IMR-90 (cell line): ENCODE measurements at regions of chr12 and their contacts with region 1.

Region 1: DNA sequence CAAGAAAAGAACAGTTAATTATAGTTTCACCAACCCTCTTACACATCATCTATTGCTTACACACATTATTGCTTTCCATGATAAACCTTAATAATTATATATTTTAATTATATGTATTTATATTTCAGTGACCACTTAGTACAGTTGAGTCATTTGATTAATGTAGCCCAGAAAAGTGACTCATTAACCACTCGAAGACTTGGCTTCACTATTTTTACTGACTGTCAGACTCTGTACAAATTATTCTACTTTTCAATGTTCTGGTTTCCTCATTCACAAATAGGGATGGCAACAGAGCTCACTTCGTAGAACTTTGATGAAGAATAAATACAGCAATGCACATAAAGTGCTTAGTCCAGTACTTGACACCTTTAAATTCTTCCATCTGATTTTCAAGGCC is 98.3 kb downstream of the CFAP54 start:
- DNase-seq: peak; percentile 22
- ATAC-seq: no peak
- H3K4me3 ChIP-seq: no peak overlapping the region
- H3K27ac ChIP-seq: no peak overlapping the region
- H3K4me1 ChIP-seq: no peaks in the 10 kb centered on the region
- H3K27me3 ChIP-seq: no peaks in the 10 kb centered on the region
- CTCF ChIP-seq: no peak
- POLR2A ChIP-seq: no peak
- RAD21 ChIP-seq: no peak

Region 2: GRCh38 chr12:96195845-96196451 is 391.7 kb before region 1 on chr12:
- CTCF ChIA-PET with region 1: no interaction called
- POLR2A ChIA-PET with region 1: no interaction called
- dilution Hi-C with region 1: no loop called
- in situ Hi-C with region 1: no loop called
- intact Hi-C with region 1: no loop called
- DNase-seq: peak; percentile 74
- ATAC-seq: peak; percentile 27
- H3K4me3 ChIP-seq: peak overlapping the region; percentile 97
- H3K27ac ChIP-seq: peak overlapping the region; percentile 90
- H3K4me1 ChIP-seq: peaks cover 5% of the 10 kb centered on the region
- H3K27me3 ChIP-seq: no peaks in the 10 kb centered on the region
- CTCF ChIP-seq: no peak
- POLR2A ChIP-seq: peak; percentile 85
- RAD21 ChIP-seq: no peak

Region 3: GRCh38 chr12:97404543-97404942 is 816.9 kb after region 1 on chr12:
- CTCF ChIA-PET with region 1: no interaction called
- POLR2A ChIA-PET with region 1: no interaction called
- dilution Hi-C with region 1: no loop called
- in situ Hi-C with region 1: no loop called
- intact Hi-C with region 1: loop called (anchors 10 kb)
- DNase-seq: peak; percentile 6
- ATAC-seq: no peak
- H3K4me3 ChIP-seq: no peak overlapping the region
- H3K27ac ChIP-seq: no peak overlapping the region
- H3K4me1 ChIP-seq: no peaks in the 10 kb centered on the region
- H3K27me3 ChIP-seq: no peaks in the 10 kb centered on the region
- CTCF ChIP-seq: peak; percentile 42
- POLR2A ChIP-seq: no peak
- RAD21 ChIP-seq: peak; percentile 40; the same call in 1 of the 2 replicates